ENCODE measurements at regions of chr10 and their contacts with region 1.

Region 1: DNA sequence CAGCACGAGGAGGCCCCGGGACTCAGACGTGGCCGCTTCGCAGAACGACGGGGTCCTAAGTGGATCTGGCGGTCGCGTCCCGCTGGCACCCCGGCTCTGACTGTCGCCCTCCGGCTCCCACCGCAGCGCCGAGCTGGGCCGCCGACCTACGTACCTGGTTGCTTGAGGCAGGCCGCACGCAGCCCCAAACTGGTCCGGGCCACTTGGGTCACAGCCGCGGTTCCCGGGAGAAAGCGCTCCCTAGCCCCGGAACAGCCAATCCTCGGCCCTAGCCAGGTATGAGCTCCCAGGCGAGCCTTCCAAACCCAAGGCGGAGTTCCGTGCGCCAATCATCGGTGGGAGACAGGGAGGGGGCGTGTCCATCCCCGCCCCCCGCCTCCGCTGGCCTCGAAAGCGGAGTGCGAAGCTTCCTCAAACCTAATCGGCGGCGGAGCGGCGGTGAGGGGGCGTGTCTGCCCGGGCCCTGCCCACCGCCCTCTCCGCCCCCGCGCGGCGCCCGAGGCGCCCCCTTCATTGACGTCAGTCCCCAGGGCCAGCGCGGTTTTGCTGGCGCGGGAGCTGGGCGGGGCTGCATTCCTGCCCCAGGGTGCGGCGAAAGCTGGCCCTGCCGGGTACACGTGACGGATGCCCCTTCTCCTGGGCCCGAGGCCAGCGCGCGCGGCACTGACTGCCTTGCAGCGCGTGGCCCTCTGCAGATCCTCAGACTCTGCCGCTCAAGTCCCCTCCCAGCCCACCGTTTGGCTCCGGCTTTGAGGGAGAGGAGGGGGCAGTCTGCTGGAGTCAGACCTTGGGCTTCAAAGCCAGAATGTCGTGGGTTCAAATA is at the start of gene AVPI1:
- DNase-seq: peak; percentile 97
- ATAC-seq: peak; percentile 96
- H3K4me3 Mint-ChIP-seq: peak within 1 kb of the TSS; percentile 87
- H3K27ac Mint-ChIP-seq: peak within 1 kb of the TSS; percentile 68
- H3K4me1 Mint-ChIP-seq: peaks cover 9% of the 10 kb centered on the region
- H3K27me3 Mint-ChIP-seq: no peaks in the 10 kb centered on the region
- CTCF ChIP-seq: no peak
- total RNA-seq, gene AVPI1: 0.51 and 1.2 TPM in 2 replicates

Region 2: GRCh38 chr10:97593421-97593820 is 93.8 kb before region 1 on chr10:
- CTCF ChIA-PET with region 1: no interaction called
- POLR2A ChIA-PET with region 1: no interaction called
- intact Hi-C with region 1: no loop called
- DNase-seq: no peak
- ATAC-seq: no peak
- H3K4me3 Mint-ChIP-seq: no peak overlapping the region
- H3K27ac Mint-ChIP-seq: no peak overlapping the region
- H3K4me1 Mint-ChIP-seq: no peaks in the 10 kb centered on the region
- H3K27me3 Mint-ChIP-seq: no peaks in the 10 kb centered on the region
- CTCF ChIP-seq: no peak

Region 3: GRCh38 chr10:97632949-97633884 is 54.0 kb before region 1 on chr10 and contains the start of gene MORN4:
- CTCF ChIA-PET with region 1: no interaction called
- POLR2A ChIA-PET with region 1: no interaction called
- intact Hi-C with region 1: loop called (anchors 1 kb)
- DNase-seq: peak; percentile 84
- ATAC-seq: peak; percentile 99
- H3K4me3 Mint-ChIP-seq: peak within 1 kb of the TSS; percentile 100
- H3K27ac Mint-ChIP-seq: peak within 1 kb of the TSS; percentile 83
- H3K4me1 Mint-ChIP-seq: peaks cover 16% of the 10 kb centered on the region
- H3K27me3 Mint-ChIP-seq: no peaks in the 10 kb centered on the region
- CTCF ChIP-seq: no peak
- total RNA-seq, gene MORN4: 1.5 and 2.9 TPM in 2 replicates

Region 4: GRCh38 chr10:97640174-97640867 is 46.9 kb before region 1 on chr10 and contains the start of gene PI4K2A:
- CTCF ChIA-PET with region 1: no interaction called
- POLR2A ChIA-PET with region 1: interaction called, 18 read pairs
- intact Hi-C with region 1: loop called (anchors 1 kb)
- DNase-seq: peak; percentile 92
- ATAC-seq: peak; percentile 96
- H3K4me3 Mint-ChIP-seq: peak within 1 kb of the TSS; percentile 97
- H3K27ac Mint-ChIP-seq: peak within 1 kb of the TSS; percentile 90
- H3K4me1 Mint-ChIP-seq: peaks cover 23% of the 10 kb centered on the region
- H3K27me3 Mint-ChIP-seq: no peaks in the 10 kb centered on the region
- CTCF ChIP-seq: no peak
- total RNA-seq, gene PI4K2A: 15.0 and 15.1 TPM in 2 replicates

Region 5: DNA sequence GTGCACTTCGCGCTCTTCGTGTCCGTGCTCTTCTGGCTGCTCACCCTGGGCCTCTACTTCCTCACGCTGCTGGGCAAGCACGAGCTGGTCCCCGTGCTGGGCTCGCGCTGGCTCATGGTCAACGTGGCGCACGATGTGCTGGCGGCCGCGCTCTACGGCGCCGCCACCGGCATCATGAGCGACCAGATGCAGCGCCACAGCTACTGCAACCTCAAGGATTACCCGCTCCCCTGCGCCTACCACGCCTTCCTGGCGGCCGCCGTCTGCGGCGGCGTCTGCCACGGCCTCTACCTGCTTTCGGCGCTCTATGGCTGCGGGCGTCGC is 26.8 kb after region 1 on chr10:
- CTCF ChIA-PET with region 1: interaction called, 5 read pairs
- POLR2A ChIA-PET with region 1: interaction called, 16 read pairs
- intact Hi-C with region 1: loop called (anchors 1 kb)
- DNase-seq: peak; percentile 47
- ATAC-seq: peak; percentile 84
- H3K4me3 Mint-ChIP-seq: peak overlapping the region; percentile 97
- H3K27ac Mint-ChIP-seq: peak overlapping the region; percentile 73
- H3K4me1 Mint-ChIP-seq: peaks cover 14% of the 10 kb centered on the region
- H3K27me3 Mint-ChIP-seq: peaks cover 22% of the 10 kb centered on the region
- CTCF ChIP-seq: no peak

Region 6: DNA sequence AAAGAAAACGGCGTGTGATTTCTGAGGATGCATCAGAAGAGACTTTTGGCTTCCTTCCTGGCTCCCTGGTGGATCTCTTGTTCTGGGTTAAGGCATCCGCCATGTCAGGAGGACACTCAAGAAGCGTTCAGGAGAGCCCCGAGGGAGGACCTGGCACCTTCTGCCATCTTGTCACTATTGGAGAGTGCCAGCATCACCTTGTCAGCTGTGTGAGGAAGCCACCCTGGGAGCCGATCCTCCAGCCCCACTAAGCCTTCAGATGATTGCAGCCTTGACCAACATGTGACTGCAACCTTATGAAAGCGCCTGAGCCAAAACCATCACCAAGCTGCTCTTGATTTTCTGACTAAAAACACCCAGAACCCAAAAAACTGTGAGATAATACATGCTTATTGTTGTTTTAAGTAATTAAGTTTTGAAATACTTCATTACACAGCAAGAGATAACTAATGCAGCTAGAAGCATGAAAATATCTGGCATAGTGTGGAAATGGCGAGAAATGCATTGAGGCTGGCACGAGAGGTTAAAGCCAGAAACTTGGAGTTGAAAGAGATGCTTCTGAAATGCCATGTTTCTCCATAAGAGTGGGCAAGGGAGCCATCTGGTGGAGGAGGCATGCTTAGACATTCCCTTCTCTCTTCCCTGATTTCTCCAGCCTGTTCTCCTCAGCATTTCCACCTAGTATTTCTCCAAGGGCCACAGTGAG is 44.3 kb after region 1 on chr10:
- CTCF ChIA-PET with region 1: interaction called, 16 read pairs
- POLR2A ChIA-PET with region 1: interaction called, 44 read pairs
- intact Hi-C with region 1: no loop called
- DNase-seq: no peak
- ATAC-seq: peak; percentile 75
- H3K4me3 Mint-ChIP-seq: no peak overlapping the region
- H3K27ac Mint-ChIP-seq: no peak overlapping the region
- H3K4me1 Mint-ChIP-seq: peaks cover 5% of the 10 kb centered on the region
- H3K27me3 Mint-ChIP-seq: peaks cover 8% of the 10 kb centered on the region
- CTCF ChIP-seq: no peak

Region 7: GRCh38 chr10:97736902-97737769 is 50.0 kb after region 1 on chr10 and contains the start of gene ZFYVE27:
- CTCF ChIA-PET with region 1: interaction called, 16 read pairs
- POLR2A ChIA-PET with region 1: interaction called, 44 read pairs
- intact Hi-C with region 1: loop called (anchors 1 kb)
- DNase-seq: peak; percentile 94
- ATAC-seq: peak; percentile 90
- H3K4me3 Mint-ChIP-seq: peak within 1 kb of the TSS; percentile 97
- H3K27ac Mint-ChIP-seq: peak within 1 kb of the TSS; percentile 97
- H3K4me1 Mint-ChIP-seq: peaks cover 47% of the 10 kb centered on the region
- H3K27me3 Mint-ChIP-seq: no peaks in the 10 kb centered on the region
- CTCF ChIP-seq: no peak
- total RNA-seq, gene ZFYVE27: 45.3 and 65.7 TPM in 2 replicates

Region 8: GRCh38 chr10:97974526-97975525 is 287.7 kb after region 1 on chr10:
- CTCF ChIA-PET with region 1: no interaction called
- POLR2A ChIA-PET with region 1: no interaction called
- intact Hi-C with region 1: no loop called
- DNase-seq: no peak
- ATAC-seq: no peak
- H3K4me3 Mint-ChIP-seq: no peak overlapping the region
- H3K27ac Mint-ChIP-seq: no peak overlapping the region
- H3K4me1 Mint-ChIP-seq: no peaks in the 10 kb centered on the region
- H3K27me3 Mint-ChIP-seq: peaks cover 33% of the 10 kb centered on the region
- CTCF ChIP-seq: no peak

Region 9: DNA sequence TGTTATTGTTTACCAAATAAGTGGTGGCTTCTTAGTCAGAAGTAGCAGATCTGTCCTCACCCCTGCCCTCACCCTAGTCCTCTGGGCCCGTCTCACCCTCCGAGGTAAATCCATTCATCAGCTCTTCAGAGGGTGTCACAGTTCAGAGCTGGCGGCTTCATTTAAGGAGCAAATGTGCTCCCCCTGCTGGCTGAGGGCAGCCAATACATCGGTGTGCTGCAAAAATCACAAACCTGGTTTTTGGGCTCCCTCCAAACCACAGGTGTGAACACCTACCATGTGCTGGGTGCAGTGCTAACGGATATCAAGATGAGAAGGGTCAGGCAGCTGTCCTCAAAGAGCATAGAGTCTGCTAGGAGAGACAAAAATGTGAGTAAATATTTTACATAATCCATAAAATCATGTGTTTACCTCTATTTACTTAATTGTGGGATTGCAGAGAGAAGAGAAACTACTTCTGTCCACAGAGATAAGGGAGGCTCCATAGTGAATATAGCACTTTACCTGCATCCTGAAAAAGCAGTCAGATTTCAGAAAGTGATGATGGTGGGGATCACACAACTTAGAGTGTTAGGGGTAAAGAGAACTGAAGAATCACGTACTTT is 358.7 kb after region 1 on chr10:
- CTCF ChIA-PET with region 1: interaction called, 8 read pairs
- POLR2A ChIA-PET with region 1: no interaction called
- intact Hi-C with region 1: loop called (anchors 5 kb)
- DNase-seq: no peak
- ATAC-seq: peak; percentile 75
- H3K4me3 Mint-ChIP-seq: no peak overlapping the region
- H3K27ac Mint-ChIP-seq: no peak overlapping the region
- H3K4me1 Mint-ChIP-seq: no peaks in the 10 kb centered on the region
- H3K27me3 Mint-ChIP-seq: peaks cover 27% of the 10 kb centered on the region
- CTCF ChIP-seq: peak; percentile 26

Measured in activated B cell treated with CpG ODN at 0.5 μM for 24 hours (primary cell).